Naive thymus-derived CD4-positive, alpha-beta T cell (primary cell): ENCODE measurements at regions of chr1 and their contacts with region 1.

Region 1: GRCh38 chr1:145957443-145958319 is at the start of gene LIX1L:
- DNase-seq: peak; percentile 79 to 97 (median 94)
- ATAC-seq: peak; percentile 95
- H3K4me3 ChIP-seq: peak within 1 kb of the TSS; percentile 70
- H3K4me3 Mint-ChIP-seq: peak within 1 kb of the TSS; percentile 88 to 99 (median 98)
- H3K27ac ChIP-seq: peak within 1 kb of the TSS; percentile 94
- H3K27ac Mint-ChIP-seq: peak within 1 kb of the TSS; percentile 87 to 98 (median 92)
- H3K4me1 ChIP-seq: peaks cover 35 to 57% of the 10 kb centered on the region in 2 donors
- H3K4me1 Mint-ChIP-seq: peaks cover 59 to 70% (median 66%) of the 10 kb centered on the region in 7 donors
- H3K27me3 ChIP-seq: no peaks in the 10 kb centered on the region
- H3K27me3 Mint-ChIP-seq: peaks cover 0 to 4% (median 0%) of the 10 kb centered on the region in 5 donors
- total RNA-seq, gene LIX1L: 31.6 to 59.2 (median 47.6) TPM

Region 2: DNA sequence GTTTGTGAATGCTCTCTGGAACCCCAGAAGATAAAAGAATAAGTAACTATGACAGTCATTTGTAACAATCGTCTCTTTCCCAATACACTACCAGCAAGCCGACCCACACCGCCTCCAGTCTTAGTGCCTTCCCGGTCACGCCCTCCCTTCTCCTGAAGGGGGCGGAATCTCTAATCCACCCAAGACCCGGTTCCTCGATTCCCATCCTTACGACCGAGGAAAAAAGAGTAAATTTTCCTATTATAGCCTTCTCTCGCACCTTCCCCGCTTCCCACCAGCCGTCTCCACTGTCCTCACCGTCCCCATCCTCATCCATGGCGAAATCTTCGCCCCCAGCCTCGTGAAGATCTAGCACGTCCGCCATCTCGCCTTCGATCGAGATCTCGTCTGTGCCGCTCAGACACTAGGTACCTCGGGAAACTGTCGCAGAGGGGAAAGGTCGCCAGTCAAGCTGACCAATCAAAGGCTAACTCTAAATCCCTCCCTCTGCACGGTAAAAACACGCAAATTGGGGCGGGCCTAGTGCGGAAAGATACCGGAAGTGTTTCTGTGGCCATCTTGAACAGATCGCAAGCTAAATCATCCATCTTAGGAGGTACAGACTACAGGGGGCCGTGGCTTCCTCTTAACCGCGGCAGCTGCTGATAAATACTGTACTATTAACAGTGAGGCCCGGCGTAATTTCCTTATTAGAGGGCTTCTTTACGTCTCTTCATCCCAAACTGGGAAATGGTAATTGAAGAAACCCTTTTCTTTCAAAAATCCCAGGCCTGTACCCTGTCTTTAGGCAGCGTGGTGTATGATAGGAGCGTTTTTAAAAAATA is 30.4 kb before region 1 on chr1 and contains the start of gene RBM8A:
- CTCF ChIA-PET with region 1: interaction called, 29 read pairs
- POLR2A ChIA-PET with region 1: interaction called, 137 read pairs
- intact Hi-C with region 1: loop called (anchors 1 kb)
- DNase-seq: peak; percentile 70 to 98 (median 96)
- ATAC-seq: peak; percentile 98
- H3K4me3 ChIP-seq: peak within 1 kb of the TSS; percentile 98
- H3K4me3 Mint-ChIP-seq: peak within 1 kb of the TSS in 4 of 10 donors; percentile 48 to 85 (median 75)
- H3K27ac ChIP-seq: peak within 1 kb of the TSS; percentile 100
- H3K27ac Mint-ChIP-seq: peak within 1 kb of the TSS in 3 of 9 donors; percentile 56 to 95 (median 94)
- H3K4me1 ChIP-seq: peaks cover 26 to 28% of the 10 kb centered on the region in 2 donors
- H3K4me1 Mint-ChIP-seq: peaks cover 11 to 33% (median 23%) of the 10 kb centered on the region in 7 donors
- H3K27me3 ChIP-seq: no peaks in the 10 kb centered on the region
- H3K27me3 Mint-ChIP-seq: no peaks in the 10 kb centered on the region
- total RNA-seq, gene RBM8A: 115 to 182 (median 120) TPM

Region 3: DNA sequence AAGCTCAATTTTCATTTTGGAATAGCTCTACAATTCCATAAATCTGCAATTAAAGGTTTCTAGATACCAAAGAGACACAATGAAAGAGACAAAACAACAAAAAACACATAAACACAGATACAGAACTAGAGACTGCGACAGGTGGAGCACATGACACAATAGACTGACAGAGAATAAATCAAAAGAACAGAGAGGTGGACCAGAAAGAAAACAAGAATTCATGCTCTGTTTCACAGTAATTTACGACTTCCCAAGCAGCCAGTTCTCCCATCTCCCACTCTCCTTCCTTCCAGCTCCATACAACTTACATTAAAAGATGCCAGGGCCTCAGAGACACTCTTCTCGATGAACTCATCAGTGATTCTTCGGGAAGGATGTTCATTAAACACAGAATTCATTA is 15.3 kb before region 1 on chr1:
- CTCF ChIA-PET with region 1: no interaction called
- POLR2A ChIA-PET with region 1: interaction called, 9 read pairs
- intact Hi-C with region 1: loop called in 1 of 2 experiments (anchors 1 kb)
- DNase-seq: no peak
- ATAC-seq: no peak
- H3K4me3 ChIP-seq: no peak overlapping the region
- H3K4me3 Mint-ChIP-seq: no peak overlapping the region
- H3K27ac ChIP-seq: no peak overlapping the region
- H3K27ac Mint-ChIP-seq: peak overlapping the region in 2 of 9 donors; percentile 41 to 73
- H3K4me1 ChIP-seq: no peaks in the 10 kb centered on the region
- H3K4me1 Mint-ChIP-seq: peaks cover 0 to 24% (median 13%) of the 10 kb centered on the region in 7 donors
- H3K27me3 ChIP-seq: no peaks in the 10 kb centered on the region
- H3K27me3 Mint-ChIP-seq: no peaks in the 10 kb centered on the region

Region 4: GRCh38 chr1:146007506-146008133 is 49.9 kb after region 1 on chr1:
- CTCF ChIA-PET with region 1: interaction called, 12 read pairs
- POLR2A ChIA-PET with region 1: interaction called, 15 read pairs
- intact Hi-C with region 1: no loop called
- DNase-seq: peak in 1 of 9 donors; percentile 31
- ATAC-seq: no peak
- H3K4me3 ChIP-seq: no peak overlapping the region
- H3K4me3 Mint-ChIP-seq: peak overlapping the region in 9 of 10 donors; percentile 73 to 93 (median 83)
- H3K27ac ChIP-seq: peak overlapping the region; percentile 64
- H3K27ac Mint-ChIP-seq: peak overlapping the region; percentile 86 to 97 (median 93)
- H3K4me1 ChIP-seq: peaks cover 18 to 36% of the 10 kb centered on the region in 2 donors
- H3K4me1 Mint-ChIP-seq: peaks cover 31 to 56% (median 45%) of the 10 kb centered on the region in 7 donors
- H3K27me3 ChIP-seq: no peaks in the 10 kb centered on the region
- H3K27me3 Mint-ChIP-seq: no peaks in the 10 kb centered on the region